ENCODE measurements at regions of chr22 and their contacts with region 1.

Region 1: DNA sequence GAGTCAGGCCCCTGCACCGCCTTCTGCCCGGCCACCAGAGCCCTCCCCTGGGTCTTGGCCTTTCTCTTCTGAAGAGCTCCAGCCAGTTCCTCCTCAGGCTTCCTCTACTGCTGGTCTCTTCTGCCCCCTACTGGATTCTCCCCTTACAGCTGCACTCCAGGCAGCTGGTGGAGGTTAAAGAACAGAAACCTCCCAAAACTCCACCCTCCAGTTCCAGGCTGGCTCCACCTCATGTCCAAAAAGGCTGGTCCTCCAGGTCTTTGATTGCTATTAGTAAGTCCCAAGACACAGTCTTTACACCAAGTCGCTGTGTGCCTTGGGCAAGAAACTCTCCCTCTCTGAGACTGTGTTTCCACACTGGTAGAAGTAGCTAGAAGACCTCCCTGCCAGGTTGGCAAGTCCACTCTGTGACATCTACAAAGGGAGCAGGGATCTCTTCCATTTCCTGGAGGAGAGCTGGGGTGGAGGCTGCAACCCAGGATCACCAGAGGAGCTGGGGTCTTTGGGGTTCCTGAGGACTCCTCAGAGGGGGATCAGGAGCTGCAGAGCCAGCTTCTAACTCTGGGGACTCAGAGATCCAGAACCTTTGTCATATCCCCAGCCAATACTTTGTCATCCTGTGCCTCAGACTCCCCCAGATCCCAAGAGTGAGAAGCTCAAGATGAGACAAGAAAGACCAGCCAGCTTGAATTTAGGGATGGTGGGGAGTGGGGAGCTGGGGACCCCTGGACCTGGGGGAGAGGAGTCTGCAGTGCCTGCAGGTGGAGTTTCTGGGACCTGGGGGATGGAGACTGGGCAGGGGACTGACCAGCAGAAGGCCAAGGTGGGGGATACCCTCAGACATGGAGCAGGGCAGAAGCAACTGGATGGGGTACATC is 3.4 kb upstream of the IGLL5 start:
- DNase-seq: peak; percentile 39 to 77 (median 65)
- ATAC-seq: peak; percentile 81
- H3K4me3 ChIP-seq: no peak overlapping the region
- H3K4me3 Mint-ChIP-seq: no peak overlapping the region
- H3K27ac ChIP-seq: no peak overlapping the region
- H3K27ac Mint-ChIP-seq: peak overlapping the region in 2 of 9 donors; percentile 55
- H3K4me1 ChIP-seq: no peaks in the 10 kb centered on the region
- H3K4me1 Mint-ChIP-seq: peaks cover 0 to 13% (median 0%) of the 10 kb centered on the region in 7 donors
- H3K27me3 ChIP-seq: no peaks in the 10 kb centered on the region
- H3K27me3 Mint-ChIP-seq: peaks cover 0 to 41% (median 0%) of the 10 kb centered on the region in 5 donors

Region 2: DNA sequence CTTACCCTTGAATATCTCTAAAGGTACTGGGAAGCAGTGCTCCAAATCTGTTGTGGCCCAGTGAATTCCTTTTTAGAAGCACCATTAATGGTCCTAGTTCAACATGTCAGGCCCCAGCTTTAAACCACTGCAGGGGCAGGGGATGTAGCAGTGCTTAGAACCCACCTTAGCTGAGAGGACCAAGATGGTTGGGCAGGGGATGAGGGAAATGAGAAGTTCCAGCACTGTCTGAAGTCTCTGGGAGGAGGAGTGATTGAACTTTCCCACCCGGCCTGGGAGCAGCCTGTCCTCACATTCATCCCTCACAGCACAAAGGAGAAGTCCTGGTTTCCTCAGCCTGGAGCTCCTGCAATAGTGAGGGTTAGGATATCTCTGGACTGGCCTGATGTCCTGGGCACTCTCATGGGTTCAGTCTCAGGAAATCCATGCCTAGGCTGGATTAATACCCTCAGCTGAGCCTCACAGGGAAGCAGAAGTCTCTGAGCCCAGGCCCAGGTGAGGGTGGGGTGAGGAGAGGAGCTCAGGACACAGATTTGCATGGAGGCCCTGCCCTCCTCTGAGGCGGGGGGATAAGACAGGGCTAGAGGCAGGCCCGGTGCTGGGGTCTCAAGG is 296.6 kb before region 1 on chr22:
- CTCF ChIA-PET with region 1: interaction called, 4 read pairs
- POLR2A ChIA-PET with region 1: no interaction called
- intact Hi-C with region 1: loop called in 1 of 2 experiments (anchors 5 kb)
- DNase-seq: no peak
- ATAC-seq: no peak
- H3K4me3 ChIP-seq: no peak overlapping the region
- H3K4me3 Mint-ChIP-seq: no peak overlapping the region
- H3K27ac ChIP-seq: no peak overlapping the region
- H3K27ac Mint-ChIP-seq: no peak overlapping the region
- H3K4me1 ChIP-seq: no peaks in the 10 kb centered on the region
- H3K4me1 Mint-ChIP-seq: peaks cover 0 to 1% (median 0%) of the 10 kb centered on the region in 7 donors
- H3K27me3 ChIP-seq: no peaks in the 10 kb centered on the region
- H3K27me3 Mint-ChIP-seq: peaks cover 15 to 41% (median 19%) of the 10 kb centered on the region in 5 donors

Region 3: GRCh38 chr22:22720201-22720723 is 164.0 kb before region 1 on chr22:
- CTCF ChIA-PET with region 1: interaction called, 17 read pairs
- POLR2A ChIA-PET with region 1: no interaction called
- intact Hi-C with region 1: no loop called
- DNase-seq: peak in 6 of 9 donors; percentile 9 to 34 (median 28)
- ATAC-seq: peak; percentile 83
- H3K4me3 ChIP-seq: no peak overlapping the region
- H3K4me3 Mint-ChIP-seq: no peak overlapping the region
- H3K27ac ChIP-seq: no peak overlapping the region
- H3K27ac Mint-ChIP-seq: peak overlapping the region in 1 of 9 donors; percentile 88
- H3K4me1 ChIP-seq: peaks cover 6 to 34% of the 10 kb centered on the region in 2 donors
- H3K4me1 Mint-ChIP-seq: peaks cover 0 to 28% (median 16%) of the 10 kb centered on the region in 7 donors
- H3K27me3 ChIP-seq: no peaks in the 10 kb centered on the region
- H3K27me3 Mint-ChIP-seq: peaks cover 0 to 2% (median 0%) of the 10 kb centered on the region in 5 donors

Region 4: GRCh38 chr22:22753526-22754267 is 130.6 kb before region 1 on chr22:
- CTCF ChIA-PET with region 1: interaction called, 148 read pairs
- POLR2A ChIA-PET with region 1: interaction called, 3 read pairs
- intact Hi-C with region 1: loop called (anchors 1 kb)
- DNase-seq: peak; percentile 52 to 78 (median 74)
- ATAC-seq: peak; percentile 92
- H3K4me3 ChIP-seq: peak overlapping the region; percentile 29
- H3K4me3 Mint-ChIP-seq: peak overlapping the region in 8 of 10 donors; percentile 57 to 72 (median 68)
- H3K27ac ChIP-seq: peak overlapping the region; percentile 57
- H3K27ac Mint-ChIP-seq: peak overlapping the region in 8 of 9 donors; percentile 88 to 96 (median 95)
- H3K4me1 ChIP-seq: peaks cover 11 to 57% of the 10 kb centered on the region in 2 donors
- H3K4me1 Mint-ChIP-seq: peaks cover 4 to 48% (median 44%) of the 10 kb centered on the region in 7 donors
- H3K27me3 ChIP-seq: no peaks in the 10 kb centered on the region
- H3K27me3 Mint-ChIP-seq: peaks cover 0 to 3% (median 0%) of the 10 kb centered on the region in 5 donors

Region 5: DNA sequence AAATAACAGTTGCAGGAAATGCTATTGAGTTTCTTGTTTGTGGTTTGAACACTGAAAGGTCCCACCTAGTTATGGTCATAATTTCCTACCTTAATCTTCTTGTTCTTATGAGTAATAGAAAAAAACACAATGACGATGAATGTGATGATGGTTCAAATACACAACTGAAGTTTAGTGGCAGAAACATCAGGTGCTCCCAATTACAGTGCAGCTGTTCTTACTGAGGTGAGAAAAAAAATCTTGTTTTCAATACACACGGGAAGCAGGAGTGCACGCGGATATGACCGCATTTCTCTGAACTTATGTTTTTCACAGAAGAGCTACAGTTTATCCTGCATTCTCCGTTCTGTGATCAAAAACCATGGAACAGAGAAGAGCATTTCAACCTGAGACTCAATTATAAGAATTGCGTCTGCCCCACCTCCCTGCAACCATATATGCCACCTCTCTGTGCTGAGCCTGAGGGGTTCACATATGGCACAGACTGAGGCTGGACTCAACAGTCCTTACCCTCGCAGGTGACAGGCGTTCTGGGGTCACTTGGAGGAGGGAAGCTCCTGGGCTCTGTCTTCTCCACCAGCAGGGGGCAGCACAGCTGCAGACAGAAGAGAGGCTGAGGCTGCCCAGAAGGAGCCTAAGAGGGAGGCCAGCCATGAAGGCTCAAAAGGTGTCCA is 96.3 kb before region 1 on chr22:
- CTCF ChIA-PET with region 1: interaction called, 155 read pairs
- POLR2A ChIA-PET with region 1: no interaction called
- intact Hi-C with region 1: loop called (anchors 1 kb)
- DNase-seq: peak; percentile 33 to 72 (median 61)
- ATAC-seq: peak; percentile 82
- H3K4me3 ChIP-seq: no peak overlapping the region
- H3K4me3 Mint-ChIP-seq: peak overlapping the region in 1 of 10 donors; percentile 44
- H3K27ac ChIP-seq: no peak overlapping the region
- H3K27ac Mint-ChIP-seq: peak overlapping the region in 4 of 9 donors; percentile 8 to 48 (median 26)
- H3K4me1 ChIP-seq: peaks cover 10 to 56% of the 10 kb centered on the region in 2 donors
- H3K4me1 Mint-ChIP-seq: peaks cover 12 to 44% (median 26%) of the 10 kb centered on the region in 7 donors
- H3K27me3 ChIP-seq: no peaks in the 10 kb centered on the region
- H3K27me3 Mint-ChIP-seq: peaks cover 0 to 13% (median 0%) of the 10 kb centered on the region in 5 donors

Region 6: DNA sequence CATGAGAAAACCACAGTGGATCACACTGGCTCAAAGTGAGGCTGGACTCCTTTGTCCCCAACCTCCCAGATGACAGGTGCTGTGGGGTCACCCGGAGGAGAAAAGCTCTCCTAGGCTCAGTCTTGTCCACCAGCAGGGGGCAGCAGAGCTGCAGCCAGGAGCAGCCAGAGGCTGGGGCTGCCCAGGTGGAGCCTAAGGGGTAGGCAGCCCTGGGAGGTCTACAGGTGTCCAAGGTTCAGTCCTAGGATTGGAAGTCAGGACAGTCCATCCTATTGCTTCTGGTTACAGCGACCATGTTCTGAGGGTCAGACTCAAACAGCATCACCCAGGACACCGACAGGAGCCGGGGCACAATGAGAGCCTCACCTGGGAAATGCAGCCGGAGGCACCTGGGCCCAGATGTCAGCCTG is 74.2 kb before region 1 on chr22:
- CTCF ChIA-PET with region 1: interaction called, 322 read pairs
- POLR2A ChIA-PET with region 1: interaction called, 4 read pairs
- intact Hi-C with region 1: loop called in 1 of 2 experiments (anchors 2 kb)
- DNase-seq: peak; percentile 44 to 89 (median 67)
- ATAC-seq: peak; percentile 80
- H3K4me3 ChIP-seq: no peak overlapping the region
- H3K4me3 Mint-ChIP-seq: peak overlapping the region in 1 of 10 donors; percentile 49
- H3K27ac ChIP-seq: no peak overlapping the region
- H3K27ac Mint-ChIP-seq: peak overlapping the region in 5 of 9 donors; percentile 51 to 73 (median 69)
- H3K4me1 ChIP-seq: peaks cover 8 to 34% of the 10 kb centered on the region in 2 donors
- H3K4me1 Mint-ChIP-seq: peaks cover 15 to 55% (median 48%) of the 10 kb centered on the region in 7 donors
- H3K27me3 ChIP-seq: no peaks in the 10 kb centered on the region
- H3K27me3 Mint-ChIP-seq: peaks cover 0 to 35% (median 0%) of the 10 kb centered on the region in 5 donors

Region 7: DNA sequence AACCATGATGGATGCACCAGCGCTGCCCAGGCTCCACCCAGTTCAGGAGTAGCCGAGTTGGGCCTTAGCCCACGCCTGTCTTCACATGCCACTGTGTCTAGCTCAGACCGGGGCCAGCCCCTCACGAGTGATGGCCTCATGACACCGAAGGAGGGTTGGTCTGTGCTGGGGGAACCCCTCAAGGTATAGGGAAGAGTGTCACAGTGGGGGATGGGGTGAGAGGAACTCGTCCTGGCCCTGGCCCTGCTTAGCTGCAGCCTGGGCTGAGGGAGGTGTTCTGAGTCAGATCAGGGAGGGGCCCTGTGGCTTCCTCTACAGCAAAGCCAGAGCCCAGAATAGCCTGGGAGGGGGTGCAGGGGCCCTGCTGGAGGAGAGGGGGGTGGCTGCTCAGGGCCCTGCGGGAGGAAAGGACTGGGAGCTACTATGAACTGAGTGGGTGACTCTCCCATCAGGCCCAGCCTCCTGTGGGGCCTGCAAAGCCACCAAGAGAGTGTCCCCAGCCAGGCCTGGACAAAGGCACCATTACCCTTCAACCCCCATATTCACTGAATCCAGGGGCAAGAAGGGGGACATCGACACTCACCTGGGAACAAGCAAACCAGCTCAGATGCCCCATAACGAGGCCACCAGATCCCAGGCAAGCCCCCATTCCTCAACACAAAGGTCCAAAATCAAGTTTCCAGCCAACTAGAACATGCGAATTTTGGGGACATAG is 44.6 kb after region 1 on chr22:
- CTCF ChIA-PET with region 1: no interaction called
- POLR2A ChIA-PET with region 1: no interaction called
- intact Hi-C with region 1: no loop called
- DNase-seq: peak in 5 of 9 donors; percentile 4 to 61 (median 26)
- ATAC-seq: peak; percentile 96
- H3K4me3 ChIP-seq: no peak overlapping the region
- H3K4me3 Mint-ChIP-seq: peak overlapping the region in 1 of 10 donors; percentile 60
- H3K27ac ChIP-seq: no peak overlapping the region
- H3K27ac Mint-ChIP-seq: peak overlapping the region in 1 of 9 donors; percentile 77
- H3K4me1 ChIP-seq: peaks cover 5 to 6% of the 10 kb centered on the region in 2 donors
- H3K4me1 Mint-ChIP-seq: peaks cover 0 to 62% (median 15%) of the 10 kb centered on the region in 7 donors
- H3K27me3 ChIP-seq: no peaks in the 10 kb centered on the region
- H3K27me3 Mint-ChIP-seq: peaks cover 0 to 6% (median 0%) of the 10 kb centered on the region in 5 donors

Region 8: DNA sequence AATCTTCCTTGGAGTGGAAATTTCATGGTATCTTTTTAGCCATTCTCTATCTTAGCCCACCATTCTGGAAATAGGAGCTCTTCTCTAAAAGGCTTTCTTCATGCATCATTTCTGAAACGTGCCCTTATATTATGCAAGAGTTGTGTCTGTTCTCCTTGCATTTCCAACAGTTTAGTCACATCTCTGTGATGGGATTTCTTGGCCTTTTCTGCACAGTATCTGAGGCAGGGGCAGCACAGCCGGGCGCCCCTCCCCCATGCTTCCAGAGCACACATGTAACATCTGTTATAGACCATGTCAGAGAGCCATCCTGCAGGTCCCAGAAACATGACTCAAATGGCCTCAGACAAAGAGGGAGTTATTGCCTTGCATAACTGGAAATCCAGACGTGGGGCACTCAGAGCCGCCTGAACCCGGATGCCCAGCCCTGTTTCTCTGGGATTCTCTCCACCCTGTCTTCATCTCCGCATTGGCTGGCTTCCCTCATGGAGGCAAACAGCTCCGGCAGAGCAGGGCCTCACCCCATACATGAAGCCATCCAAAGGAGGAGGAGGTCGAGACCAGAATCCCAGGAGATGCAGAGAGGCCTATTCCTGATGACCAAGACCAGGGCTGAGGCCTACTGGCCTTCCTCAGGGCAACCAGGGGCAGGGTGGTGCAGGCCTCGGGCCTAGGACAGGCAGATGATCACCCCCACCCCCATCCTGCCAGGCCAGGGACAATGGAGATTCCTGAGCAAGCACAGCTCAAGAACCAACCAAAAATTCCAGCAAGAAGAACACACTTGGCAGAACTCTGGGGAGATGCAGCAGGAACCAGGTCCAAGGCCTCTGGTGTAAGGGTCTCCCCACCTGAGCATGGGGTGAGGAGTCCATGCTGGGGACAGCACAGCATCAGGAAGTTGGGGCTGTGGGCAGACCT is 64.7 kb after region 1 on chr22:
- CTCF ChIA-PET with region 1: no interaction called
- POLR2A ChIA-PET with region 1: no interaction called
- intact Hi-C with region 1: no loop called
- DNase-seq: no peak
- ATAC-seq: no peak
- H3K4me3 ChIP-seq: no peak overlapping the region
- H3K4me3 Mint-ChIP-seq: no peak overlapping the region
- H3K27ac ChIP-seq: no peak overlapping the region
- H3K27ac Mint-ChIP-seq: no peak overlapping the region
- H3K4me1 ChIP-seq: no peaks in the 10 kb centered on the region
- H3K4me1 Mint-ChIP-seq: peaks cover 0 to 6% (median 0%) of the 10 kb centered on the region in 7 donors
- H3K27me3 ChIP-seq: no peaks in the 10 kb centered on the region
- H3K27me3 Mint-ChIP-seq: peaks cover 14 to 41% (median 24%) of the 10 kb centered on the region in 5 donors